Adrenal gland (tissue), 19 donors: ENCODE measurements at regions of chr11 and their contacts with region 1.

Region 1: GRCh38 chr11:82718307-82718706 is 15.4 kb downstream of the FAM181B start:
- DNase-seq: peak; percentile 26 to 71 (median 39)
- H3K4me3 ChIP-seq: no peak overlapping the region
- H3K27ac ChIP-seq: no peak overlapping the region
- H3K4me1 ChIP-seq: no peaks in the 10 kb centered on the region
- H3K27me3 ChIP-seq: no peaks in the 10 kb centered on the region
- CTCF ChIP-seq: peak; percentile 68 to 83 (median 74)
- POLR2A ChIP-seq: no peak

Region 2: DNA sequence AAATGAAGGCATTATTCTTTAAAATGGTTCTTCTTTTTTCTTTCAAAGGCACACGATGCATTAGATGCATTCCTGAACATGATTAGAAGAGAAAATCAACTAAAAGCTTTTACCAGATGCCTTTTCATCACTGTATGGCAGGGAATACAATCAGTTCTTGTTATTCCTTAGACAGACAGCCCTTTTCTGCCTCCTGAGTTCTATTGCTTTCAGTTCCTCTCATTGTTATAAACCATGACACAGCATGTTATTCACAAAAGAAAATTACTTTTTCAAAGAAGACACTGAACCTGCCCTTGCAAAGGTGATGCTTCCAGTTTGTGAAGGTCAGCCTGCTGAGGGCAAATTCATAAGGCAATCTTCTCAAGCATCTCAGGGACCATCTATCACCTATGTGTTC is 54.8 kb before region 1 on chr11:
- intact Hi-C with region 1: no loop called
- DNase-seq: no peak
- H3K4me3 ChIP-seq: no peak overlapping the region
- H3K27ac ChIP-seq: no peak overlapping the region
- H3K4me1 ChIP-seq: no peaks in the 10 kb centered on the region
- H3K27me3 ChIP-seq: no peaks in the 10 kb centered on the region
- CTCF ChIP-seq: no peak
- POLR2A ChIP-seq: no peak

Region 3: DNA sequence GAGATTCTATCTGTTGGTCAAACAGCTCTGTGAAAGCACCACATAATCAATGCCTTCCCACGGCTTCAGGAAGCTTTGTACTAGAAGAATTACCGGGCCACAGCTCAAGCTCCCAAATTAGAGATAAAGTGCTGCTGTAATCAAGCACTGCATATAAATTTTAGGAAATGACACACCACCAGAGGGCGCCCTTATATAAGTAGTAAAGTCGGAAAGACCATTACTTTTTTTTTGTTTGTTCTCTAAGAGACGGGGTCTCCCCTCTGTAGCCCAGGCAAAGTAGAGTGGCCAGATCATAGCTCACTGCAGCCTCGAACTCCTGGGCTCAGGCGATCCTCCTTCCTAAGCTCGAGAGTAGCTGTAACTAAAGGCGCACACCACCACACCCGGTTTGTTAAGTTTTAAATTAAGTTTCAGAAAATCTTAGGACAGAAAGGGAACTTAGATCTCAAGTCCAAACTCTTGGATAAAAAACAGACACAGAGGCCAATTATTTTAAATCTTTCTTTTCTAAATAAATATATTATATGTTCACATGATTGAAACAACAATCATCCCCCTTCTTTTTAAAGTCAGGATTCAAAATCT is 149.3 kb after region 1 on chr11:
- intact Hi-C with region 1: loop called in 1 of 2 experiments (anchors 10 kb)
- DNase-seq: peak; percentile 76 to 93 (median 87)
- H3K4me3 ChIP-seq: peak overlapping the region in 1 of 4 donors; percentile 31
- H3K27ac ChIP-seq: no peak overlapping the region
- H3K4me1 ChIP-seq: peaks cover 26 to 50% of the 10 kb centered on the region in 2 donors
- H3K27me3 ChIP-seq: no peaks in the 10 kb centered on the region
- CTCF ChIP-seq: peak; percentile 60 to 80 (median 72)
- POLR2A ChIP-seq: no peak